ENCODE measurements at regions of chr22 and their contacts with region 1.

Region 1: GRCh38 chr22:42202669-42203068 is 67.8 kb downstream of the TCF20 start:
- DNase-seq: peak in 2 of 9 donors; percentile 9 to 46
- ATAC-seq: peak; percentile 67
- H3K4me3 ChIP-seq: no peak overlapping the region
- H3K4me3 Mint-ChIP-seq: peak overlapping the region in 8 of 10 donors; percentile 27 to 88 (median 60)
- H3K27ac ChIP-seq: no peak overlapping the region
- H3K27ac Mint-ChIP-seq: peak overlapping the region in 6 of 9 donors; percentile 28 to 81 (median 46)
- H3K4me1 ChIP-seq: peaks cover 19 to 26% of the 10 kb centered on the region in 2 donors
- H3K4me1 Mint-ChIP-seq: peaks cover 47 to 80% (median 70%) of the 10 kb centered on the region in 7 donors
- H3K27me3 ChIP-seq: no peaks in the 10 kb centered on the region
- H3K27me3 Mint-ChIP-seq: no peaks in the 10 kb centered on the region

Region 2: GRCh38 chr22:42180349-42180842 is 22.3 kb before region 1 on chr22:
- CTCF ChIA-PET with region 1: no interaction called
- POLR2A ChIA-PET with region 1: no interaction called
- intact Hi-C with region 1: loop called in 1 of 2 experiments (anchors 1 kb)
- DNase-seq: peak in 7 of 9 donors; percentile 59 to 78 (median 71)
- ATAC-seq: peak; percentile 97
- H3K4me3 ChIP-seq: no peak overlapping the region
- H3K4me3 Mint-ChIP-seq: peak overlapping the region; percentile 19 to 73 (median 57)
- H3K27ac ChIP-seq: peak overlapping the region; percentile 52
- H3K27ac Mint-ChIP-seq: peak overlapping the region; percentile 55 to 90 (median 79)
- H3K4me1 ChIP-seq: peaks cover 25 to 38% of the 10 kb centered on the region in 2 donors
- H3K4me1 Mint-ChIP-seq: peaks cover 50 to 86% (median 75%) of the 10 kb centered on the region in 7 donors
- H3K27me3 ChIP-seq: no peaks in the 10 kb centered on the region
- H3K27me3 Mint-ChIP-seq: no peaks in the 10 kb centered on the region

Region 3: GRCh38 chr22:42300259-42301076 is 97.8 kb after region 1 on chr22:
- CTCF ChIA-PET with region 1: no interaction called
- POLR2A ChIA-PET with region 1: no interaction called
- intact Hi-C with region 1: no loop called
- DNase-seq: peak in 5 of 9 donors; percentile 34 to 63 (median 38)
- ATAC-seq: peak; percentile 81
- H3K4me3 ChIP-seq: peak overlapping the region; percentile 68
- H3K4me3 Mint-ChIP-seq: peak overlapping the region; percentile 74 to 95 (median 84)
- H3K27ac ChIP-seq: peak overlapping the region; percentile 79
- H3K27ac Mint-ChIP-seq: peak overlapping the region; percentile 86 to 98 (median 95)
- H3K4me1 ChIP-seq: peaks cover 29 to 90% of the 10 kb centered on the region in 2 donors
- H3K4me1 Mint-ChIP-seq: peaks cover 63 to 98% (median 91%) of the 10 kb centered on the region in 7 donors
- H3K27me3 ChIP-seq: no peaks in the 10 kb centered on the region
- H3K27me3 Mint-ChIP-seq: peaks cover 0 to 24% (median 0%) of the 10 kb centered on the region in 5 donors

Measured in naive thymus-derived CD4-positive, alpha-beta T cell (primary cell).